SK-N-SH (cell line): ENCODE measurements at regions of chr11 and their contacts with region 1.

Region 1: DNA sequence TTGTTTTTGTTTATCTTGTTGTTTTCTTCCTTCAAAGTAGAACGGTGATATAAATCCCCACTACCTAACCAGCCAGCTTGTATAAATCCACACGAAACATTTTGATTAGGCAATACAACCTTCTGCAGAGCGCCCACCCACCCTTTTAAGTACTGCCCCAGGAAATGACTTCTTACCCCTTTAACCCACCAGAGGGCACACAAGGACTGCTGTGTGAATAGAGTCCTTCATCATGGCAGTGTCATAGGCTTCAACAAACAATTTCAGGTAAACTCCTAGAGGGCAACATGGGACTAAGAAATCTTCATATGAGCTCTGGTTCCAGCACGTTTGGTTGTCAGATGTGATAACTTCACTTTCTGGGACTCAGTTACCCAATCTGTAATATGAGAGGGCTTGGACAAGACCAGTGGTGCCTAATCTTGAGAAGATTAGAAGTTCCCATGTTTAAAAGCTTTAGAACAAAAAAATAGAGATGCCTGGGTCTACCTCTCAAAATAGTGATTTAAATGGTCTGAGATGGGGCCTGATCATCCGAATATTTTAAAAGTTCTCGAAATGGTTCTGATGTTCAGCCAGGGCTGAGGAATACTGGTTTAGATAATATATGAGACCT is 56.1 kb downstream of the PIWIL4 start:
- DNase-seq: peak; percentile 77
- H3K4me3 ChIP-seq: peak overlapping the region in 1 of 2 experiments; percentile 10; a peak in 1 of 4 replicates
- H3K27ac ChIP-seq: no peak overlapping the region
- H3K4me1 ChIP-seq: no peaks in the 10 kb centered on the region
- H3K27me3 ChIP-seq: no peaks in the 10 kb centered on the region
- CTCF ChIP-seq: peak; percentile 82
- EP300 ChIP-seq: no peak
- RAD21 ChIP-seq: peak; percentile 99

Region 2: DNA sequence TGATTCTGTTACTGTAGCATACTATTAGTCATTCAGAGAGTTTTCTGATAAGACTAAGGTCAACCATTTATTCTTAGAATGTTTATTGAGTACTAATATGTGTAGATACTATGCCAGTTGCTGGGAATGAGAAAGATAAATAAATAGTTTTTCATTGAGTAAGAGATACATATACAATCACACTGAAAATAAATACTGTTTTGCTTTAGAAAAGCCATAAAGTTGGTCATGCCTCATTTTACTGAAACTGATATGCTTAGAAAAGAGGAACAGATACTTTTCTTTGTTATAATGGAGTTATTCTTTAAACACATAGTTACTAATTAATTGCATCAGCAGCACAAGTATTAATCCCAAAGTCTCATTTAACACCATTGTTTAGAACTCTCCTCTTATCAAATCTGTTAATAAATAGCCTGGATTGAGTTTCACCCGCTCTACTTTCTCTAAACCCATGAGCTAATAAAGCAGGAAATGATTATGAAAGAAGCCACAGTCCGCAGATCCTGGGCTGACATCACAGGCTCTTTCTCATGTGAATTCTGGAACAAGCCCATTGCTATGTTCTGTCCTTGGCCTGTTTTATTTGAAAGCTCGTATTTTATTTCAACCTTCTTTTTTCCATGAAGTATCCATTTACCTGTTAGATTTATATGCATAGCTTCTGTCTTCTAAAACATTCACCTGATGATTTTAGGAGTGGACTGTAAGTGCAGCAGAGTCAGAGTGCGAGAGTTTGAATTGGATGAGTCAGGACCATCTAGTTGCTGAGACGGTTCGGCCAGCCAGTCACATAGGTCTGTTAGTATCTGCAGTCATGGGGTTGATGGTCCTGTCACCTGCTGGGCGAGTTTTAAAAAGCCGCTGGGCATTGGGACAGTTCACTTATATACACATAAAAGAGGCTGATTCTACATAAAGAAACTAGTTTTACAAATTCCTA is 20.5 kb before region 1 on chr11:
- CTCF ChIA-PET with region 1: interaction called, 16 read pairs
- POLR2A ChIA-PET with region 1: no interaction called
- DNase-seq: no peak
- H3K4me3 ChIP-seq: peak overlapping the region in 1 of 2 experiments; percentile 46; a peak in 1 of 4 replicates
- H3K27ac ChIP-seq: no peak overlapping the region
- H3K4me1 ChIP-seq: no peaks in the 10 kb centered on the region
- H3K27me3 ChIP-seq: no peaks in the 10 kb centered on the region
- CTCF ChIP-seq: no peak
- EP300 ChIP-seq: no peak
- RAD21 ChIP-seq: no peak

Region 3: DNA sequence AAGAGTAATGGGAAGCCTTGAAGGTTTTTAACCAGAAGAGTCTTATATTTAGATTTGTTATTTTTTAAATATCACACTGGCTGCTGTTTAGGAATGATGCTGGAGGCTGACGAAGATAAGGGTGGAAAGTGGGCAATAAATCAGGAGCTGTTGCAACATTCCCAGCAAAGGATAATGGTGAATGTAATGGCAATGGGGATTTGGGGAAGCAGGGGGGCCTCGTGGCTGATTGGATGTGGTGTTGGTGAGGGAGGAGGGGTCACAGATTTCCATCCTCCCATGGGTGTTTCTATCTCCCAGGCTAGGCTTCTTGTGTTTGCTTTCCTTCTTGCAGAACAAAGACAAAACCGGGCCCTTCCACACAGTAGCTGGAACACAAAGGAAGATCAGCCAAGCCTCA is 24.7 kb after region 1 on chr11:
- CTCF ChIA-PET with region 1: interaction called, 16 read pairs
- POLR2A ChIA-PET with region 1: no interaction called
- DNase-seq: peak; percentile 40
- H3K4me3 ChIP-seq: no peak overlapping the region
- H3K27ac ChIP-seq: peak overlapping the region in 1 of 2 experiments; percentile 85; a peak in 2 of 4 replicates
- H3K4me1 ChIP-seq: peaks cover 0 to 7% of the 10 kb centered on the region in 2 experiments; a peak in 2 of 4 replicates
- H3K27me3 ChIP-seq: no peaks in the 10 kb centered on the region
- CTCF ChIP-seq: no peak
- EP300 ChIP-seq: no peak
- RAD21 ChIP-seq: no peak

Region 4: DNA sequence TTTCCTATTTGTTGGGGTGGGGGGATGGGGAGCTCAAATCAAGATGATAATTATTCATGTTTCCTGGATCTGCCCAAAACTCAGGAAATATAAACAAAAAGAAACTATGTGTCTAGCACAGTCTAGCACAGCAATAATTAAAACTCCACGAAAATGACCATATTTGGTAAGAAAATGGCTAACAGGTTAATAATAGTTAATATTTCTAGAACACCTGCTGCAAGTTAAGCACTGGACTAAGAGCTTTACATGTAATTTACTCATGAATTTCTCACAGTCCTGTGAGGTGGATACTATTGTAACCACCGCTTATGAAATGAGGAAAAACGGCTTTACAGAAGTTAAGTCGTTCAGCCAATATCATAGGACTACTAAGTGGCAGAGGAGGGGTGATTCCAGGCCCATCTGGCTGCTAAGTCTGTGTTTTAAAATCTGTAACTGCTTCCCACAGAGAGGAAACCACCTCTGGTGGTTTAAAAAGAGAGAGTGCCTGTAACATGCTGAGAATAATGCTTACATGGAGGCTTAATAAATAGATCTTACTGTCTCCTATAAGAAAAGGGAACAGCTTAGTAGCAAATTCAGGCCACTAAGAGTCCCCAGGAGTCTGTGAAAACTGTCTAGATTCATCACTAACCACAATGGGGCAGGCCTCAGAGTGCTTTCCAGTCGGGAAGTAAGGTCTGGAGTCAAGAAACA is 134.0 kb after region 1 on chr11:
- CTCF ChIA-PET with region 1: interaction called, 87 read pairs
- POLR2A ChIA-PET with region 1: no interaction called
- DNase-seq: no peak
- H3K4me3 ChIP-seq: no peak overlapping the region
- H3K27ac ChIP-seq: no peak overlapping the region
- H3K4me1 ChIP-seq: peaks cover 0 to 1% of the 10 kb centered on the region in 2 experiments; a peak in 3 of 4 replicates
- H3K27me3 ChIP-seq: no peaks in the 10 kb centered on the region
- CTCF ChIP-seq: no peak
- EP300 ChIP-seq: no peak
- RAD21 ChIP-seq: no peak

Region 5: GRCh38 chr11:94858023-94858705 is 234.9 kb after region 1 on chr11:
- CTCF ChIA-PET with region 1: interaction called, 12 read pairs
- POLR2A ChIA-PET with region 1: interaction called, 3 read pairs
- DNase-seq: no peak
- H3K4me3 ChIP-seq: no peak overlapping the region
- H3K27ac ChIP-seq: no peak overlapping the region; a peak in 1 of 4 replicates
- H3K4me1 ChIP-seq: peaks cover 0 to 5% of the 10 kb centered on the region in 2 experiments; a peak in 1 of 4 replicates
- H3K27me3 ChIP-seq: no peaks in the 10 kb centered on the region
- CTCF ChIP-seq: no peak
- EP300 ChIP-seq: no peak
- RAD21 ChIP-seq: no peak

Region 6: GRCh38 chr11:94960488-94960887 is 337.3 kb after region 1 on chr11:
- CTCF ChIA-PET with region 1: interaction called, 13 read pairs
- POLR2A ChIA-PET with region 1: no interaction called
- DNase-seq: no peak
- H3K4me3 ChIP-seq: no peak overlapping the region
- H3K27ac ChIP-seq: no peak overlapping the region
- H3K4me1 ChIP-seq: no peaks in the 10 kb centered on the region; a peak in 1 of 4 replicates
- H3K27me3 ChIP-seq: no peaks in the 10 kb centered on the region
- CTCF ChIP-seq: no peak
- EP300 ChIP-seq: no peak
- RAD21 ChIP-seq: no peak

Region 7: GRCh38 chr11:95625164-95625900 is 1002.1 kb after region 1 on chr11:
- CTCF ChIA-PET with region 1: no interaction called
- POLR2A ChIA-PET with region 1: no interaction called
- DNase-seq: no peak
- H3K4me3 ChIP-seq: no peak overlapping the region
- H3K27ac ChIP-seq: no peak overlapping the region
- H3K4me1 ChIP-seq: no peaks in the 10 kb centered on the region
- H3K27me3 ChIP-seq: no peaks in the 10 kb centered on the region
- CTCF ChIP-seq: no peak
- EP300 ChIP-seq: no peak
- RAD21 ChIP-seq: no peak